Endothelial cell of umbilical vein (primary cell): ENCODE measurements at regions of chr1 and their contacts with region 1.

Region 1: DNA sequence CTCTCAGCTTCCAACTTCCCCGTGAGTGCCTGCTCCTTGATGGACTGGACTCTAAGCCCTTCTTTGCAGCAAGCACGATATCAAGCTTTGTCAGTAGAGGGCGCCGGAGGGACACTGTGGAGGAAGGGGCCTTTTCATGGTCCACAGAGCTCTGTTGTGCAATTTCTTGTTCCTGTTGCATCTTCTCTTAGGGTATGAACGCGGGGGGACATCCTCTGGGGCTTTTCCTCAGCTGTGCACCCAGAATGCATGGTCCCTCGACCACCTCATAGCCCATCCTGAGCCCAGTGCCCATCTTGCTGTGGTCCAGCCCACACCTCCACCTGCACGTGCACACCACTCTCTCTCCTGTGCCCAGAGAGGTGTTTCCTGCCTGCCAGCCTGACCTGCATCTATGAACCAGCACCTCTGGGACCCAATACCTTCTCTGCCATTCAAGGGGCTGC is 556.8 kb downstream of the PTPRU start:
- DNase-seq: peak; percentile 72
- H3K4me3 ChIP-seq: no peak overlapping the region
- H3K27ac ChIP-seq: no peak overlapping the region
- H3K4me1 ChIP-seq: no peaks in the 10 kb centered on the region
- H3K27me3 ChIP-seq: no peaks in the 10 kb centered on the region
- CTCF ChIP-seq: peak; percentile 75 to 87
- POLR2A ChIP-seq: no peak

Region 2: DNA sequence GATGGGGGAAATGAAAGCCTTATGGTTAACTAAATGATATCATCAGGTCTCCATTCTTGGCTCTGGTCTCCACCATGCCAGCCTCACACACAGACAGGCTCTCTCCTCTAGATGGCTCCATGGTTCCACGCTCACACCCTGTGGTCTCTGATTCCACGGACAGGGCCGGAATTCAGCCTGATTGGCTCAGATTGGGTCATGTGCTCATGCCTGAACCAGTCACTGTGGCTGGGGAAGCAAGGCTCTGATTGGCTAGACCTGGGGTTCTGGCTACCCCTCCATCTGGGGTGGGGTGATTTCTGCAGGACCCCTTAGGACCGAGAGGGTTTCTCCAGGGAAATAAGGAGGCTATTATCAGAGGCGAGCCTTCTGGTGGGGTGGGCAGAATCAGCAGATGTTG is 279.8 kb before region 1 on chr1:
- CTCF ChIA-PET with region 1: no interaction called
- POLR2A ChIA-PET with region 1: no interaction called
- dilution Hi-C with region 1: no loop called
- intact Hi-C with region 1: loop called (anchors 1 kb)
- DNase-seq: peak; percentile 45
- H3K4me3 ChIP-seq: no peak overlapping the region
- H3K27ac ChIP-seq: no peak overlapping the region
- H3K4me1 ChIP-seq: no peaks in the 10 kb centered on the region
- H3K27me3 ChIP-seq: no peaks in the 10 kb centered on the region
- CTCF ChIP-seq: peak; percentile 50 to 51
- POLR2A ChIP-seq: no peak

Region 3: DNA sequence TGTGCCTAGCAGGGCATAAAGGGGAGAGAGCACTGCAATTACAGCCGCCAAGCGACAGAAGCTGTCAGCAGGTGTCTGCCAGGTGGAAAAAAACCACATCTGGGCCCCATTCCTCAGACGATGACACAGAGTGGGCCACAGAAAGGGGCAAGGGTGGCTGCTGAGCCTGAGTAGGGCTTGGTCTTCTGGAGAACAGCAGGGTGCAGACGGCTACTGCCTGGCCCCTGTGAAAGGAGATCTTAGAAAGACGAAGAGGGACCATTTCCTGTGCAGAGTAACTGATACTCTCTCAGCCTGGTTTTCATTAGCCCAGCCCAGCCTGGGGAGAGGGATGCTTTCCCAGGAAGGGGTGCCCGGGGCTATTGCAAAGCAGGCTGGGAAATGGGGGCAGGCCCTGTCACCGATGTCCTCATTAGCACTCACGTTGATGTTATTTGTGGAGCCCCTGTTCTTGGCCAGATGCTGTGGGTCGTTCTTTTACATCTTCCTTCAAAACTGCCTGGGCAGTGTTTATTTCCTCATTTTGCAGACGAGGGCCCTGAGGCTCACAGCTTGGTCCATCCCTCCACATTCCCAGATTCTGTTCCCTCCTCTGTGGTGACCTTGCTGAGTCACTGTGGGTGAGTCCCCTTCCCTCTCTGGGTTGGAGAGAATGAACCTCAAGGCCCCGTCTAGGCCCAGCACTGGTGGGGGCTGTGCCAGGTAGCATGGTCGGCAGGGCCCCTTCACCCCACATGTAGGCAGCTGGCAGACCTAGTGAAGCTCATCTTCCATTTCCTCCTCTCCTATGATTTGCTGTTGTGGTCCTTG is 84.0 kb before region 1 on chr1:
- CTCF ChIA-PET with region 1: interaction called, 20 read pairs
- POLR2A ChIA-PET with region 1: no interaction called
- dilution Hi-C with region 1: no loop called
- intact Hi-C with region 1: loop called (anchors 1 kb)
- DNase-seq: no peak
- H3K4me3 ChIP-seq: no peak overlapping the region
- H3K27ac ChIP-seq: peak overlapping the region; percentile 95
- H3K4me1 ChIP-seq: peaks cover 48% of the 10 kb centered on the region
- H3K27me3 ChIP-seq: peaks cover 10 to 12% of the 10 kb centered on the region in 2 experiments
- CTCF ChIP-seq: no peak
- POLR2A ChIP-seq: peak; percentile 60

Region 4: DNA sequence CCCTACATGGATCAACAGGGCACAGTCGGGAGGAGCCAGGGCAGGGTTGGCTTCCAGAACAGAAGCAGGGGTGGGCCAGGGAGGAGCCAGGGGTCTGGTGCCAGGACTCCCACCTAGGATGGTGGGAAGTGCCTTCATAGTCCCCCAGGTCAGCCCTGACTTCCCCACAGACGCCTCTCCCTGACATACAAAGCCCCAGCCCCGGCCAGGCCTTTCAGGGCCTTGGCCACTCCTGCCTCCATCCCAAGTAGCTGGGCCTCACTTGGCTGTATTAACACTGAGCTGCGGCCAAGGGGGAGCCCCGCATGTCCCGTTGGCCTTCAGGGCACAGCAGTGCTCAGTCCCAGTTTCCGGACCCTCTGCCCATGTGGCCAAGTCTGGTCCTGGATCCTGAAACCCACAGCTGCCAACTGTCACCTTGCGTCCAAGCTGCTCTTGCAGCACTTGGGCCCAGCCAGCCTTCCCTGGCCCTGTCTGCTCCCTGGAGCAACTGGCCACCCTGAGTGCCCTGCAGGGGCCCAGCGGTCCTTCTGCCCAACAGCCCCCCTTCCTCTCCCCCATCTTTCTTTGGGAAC is 302.4 kb after region 1 on chr1:
- CTCF ChIA-PET with region 1: no interaction called
- POLR2A ChIA-PET with region 1: no interaction called
- dilution Hi-C with region 1: no loop called
- intact Hi-C with region 1: no loop called
- DNase-seq: no peak
- H3K4me3 ChIP-seq: no peak overlapping the region
- H3K27ac ChIP-seq: no peak overlapping the region
- H3K4me1 ChIP-seq: no peaks in the 10 kb centered on the region
- H3K27me3 ChIP-seq: no peaks in the 10 kb centered on the region
- CTCF ChIP-seq: no peak
- POLR2A ChIP-seq: no peak

Region 5: GRCh38 chr1:30106125-30106524 is 313.0 kb after region 1 on chr1:
- CTCF ChIA-PET with region 1: interaction called, 38 read pairs
- POLR2A ChIA-PET with region 1: no interaction called
- dilution Hi-C with region 1: no loop called
- intact Hi-C with region 1: loop called (anchors 1 kb)
- DNase-seq: peak; percentile 14
- H3K4me3 ChIP-seq: no peak overlapping the region
- H3K27ac ChIP-seq: no peak overlapping the region
- H3K4me1 ChIP-seq: no peaks in the 10 kb centered on the region
- H3K27me3 ChIP-seq: peaks cover 0 to 1% of the 10 kb centered on the region in 2 experiments
- CTCF ChIP-seq: peak; percentile 42 to 66
- POLR2A ChIP-seq: no peak

Region 6: GRCh38 chr1:30707412-30708360 is 914.6 kb after region 1 on chr1:
- CTCF ChIA-PET with region 1: interaction called, 21 read pairs
- POLR2A ChIA-PET with region 1: no interaction called
- dilution Hi-C with region 1: no loop called
- intact Hi-C with region 1: loop called (anchors 1 kb)
- DNase-seq: peak; percentile 50
- H3K4me3 ChIP-seq: no peak overlapping the region
- H3K27ac ChIP-seq: no peak overlapping the region
- H3K4me1 ChIP-seq: no peaks in the 10 kb centered on the region
- H3K27me3 ChIP-seq: peaks cover 0 to 3% of the 10 kb centered on the region in 2 experiments
- CTCF ChIP-seq: peak; percentile 84 to 88
- POLR2A ChIP-seq: no peak